Right ventricle myocardium inferior (tissue), 1 donor: ENCODE measurements at regions of chr6 and their contacts with region 1.

Region 1: GRCh38 chr6:169969372-169970099 is 218.1 kb downstream of the ERMARD start:
- DNase-seq: no peak
- ATAC-seq: no peak

Region 2: DNA sequence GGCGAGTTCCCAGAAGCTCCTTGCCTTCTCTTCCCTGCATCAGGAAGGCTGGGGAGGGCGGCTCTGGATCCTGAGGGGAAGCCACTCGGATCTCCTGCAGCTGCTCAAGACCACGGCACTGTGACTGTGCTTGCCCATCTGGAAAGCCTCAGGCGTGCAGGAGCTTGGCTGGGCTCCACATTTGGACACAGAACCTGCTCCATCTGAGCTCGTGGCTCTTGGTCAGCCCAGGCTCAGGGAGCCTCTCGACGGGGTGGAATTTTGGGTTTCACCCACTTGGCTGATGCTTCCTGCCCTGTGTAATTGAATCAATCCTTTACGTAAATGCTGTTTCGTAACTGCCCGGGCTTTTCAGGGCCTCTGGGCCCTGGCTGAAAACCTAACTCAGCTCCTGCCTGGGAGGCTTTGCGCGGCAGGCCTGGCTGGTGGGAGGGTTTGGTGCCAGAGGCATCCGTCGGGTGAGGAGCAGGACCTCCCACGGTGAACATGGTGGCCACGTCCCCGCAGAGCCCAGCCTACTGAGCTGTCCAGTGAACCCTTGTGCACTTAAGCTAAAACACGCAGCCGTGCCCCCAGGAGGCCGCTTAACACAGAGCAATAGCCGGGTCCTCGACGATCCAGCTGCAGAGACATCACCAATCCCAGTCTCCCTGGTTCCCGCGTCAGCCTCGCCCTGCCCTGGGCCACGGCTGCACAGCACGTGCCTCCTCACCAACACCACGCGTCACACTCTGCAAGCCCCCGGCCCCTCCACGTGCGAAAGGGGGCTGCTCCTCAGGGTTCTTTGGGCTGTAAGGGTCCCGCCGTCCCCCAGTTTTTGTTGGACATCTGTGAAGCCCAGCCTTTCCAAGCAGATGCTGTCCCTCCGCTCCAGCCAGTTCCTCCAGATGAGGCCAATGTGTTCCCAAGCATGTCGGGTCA is 80.4 kb after region 1 on chr6:
- intact Hi-C with region 1: loop called (anchors 5 kb)
- DNase-seq: peak; percentile 90
- ATAC-seq: peak; percentile 93

Region 3: GRCh38 chr6:170291271-170292110 is 322.0 kb after region 1 on chr6:
- intact Hi-C with region 1: loop called (anchors 2 kb)
- DNase-seq: peak; percentile 89
- ATAC-seq: peak; percentile 49